ENCODE measurements at regions of chr3 and their contacts with region 1.

Region 1: GRCh38 chr3:134299185-134299887 is 48.7 kb upstream of the RYK start:
- DNase-seq: no peak
- ATAC-seq: peak; percentile 44 to 76 (median 70)
- H3K4me3 ChIP-seq: no peak overlapping the region
- H3K27ac ChIP-seq: no peak overlapping the region
- H3K4me1 ChIP-seq: peaks cover 0 to 5% (median 0%) of the 10 kb centered on the region in 12 donors
- H3K27me3 ChIP-seq: no peaks in the 10 kb centered on the region
- CTCF ChIP-seq: peak in 10 of 12 donors; percentile 14 to 56 (median 36)
- POLR2A ChIP-seq: no peak

Region 2: DNA sequence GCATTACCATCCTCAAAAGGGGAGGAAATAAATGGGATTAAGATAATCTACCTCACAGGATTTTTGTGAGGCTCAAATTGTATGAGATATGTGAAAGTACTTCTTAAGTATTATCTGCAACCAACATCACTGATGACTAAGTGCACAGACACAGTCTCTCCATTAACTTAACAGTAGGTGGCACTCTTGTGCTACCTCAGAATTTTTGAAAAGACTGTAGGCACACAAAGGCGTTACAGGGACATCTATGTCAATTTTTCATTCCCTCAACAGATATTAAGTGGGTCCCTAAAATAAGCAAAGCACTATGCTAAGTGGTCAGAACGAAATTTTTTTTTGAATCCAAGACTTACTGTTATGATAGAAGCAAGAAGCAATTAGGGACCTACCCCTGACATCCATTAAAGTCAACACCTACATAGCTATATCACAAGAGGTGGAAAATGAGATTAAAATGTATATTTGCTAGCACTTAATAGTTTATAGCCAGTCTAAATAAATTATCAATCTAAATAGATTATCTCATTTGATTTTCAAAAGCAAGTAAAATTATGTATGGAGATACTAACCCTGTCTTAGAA is 101.6 kb before region 1 on chr3:
- intact Hi-C with region 1: loop called in 1 of 10 experiments (anchors 5 kb)
- DNase-seq: no peak
- ATAC-seq: peak; percentile 52 to 82 (median 80)
- H3K4me3 ChIP-seq: no peak overlapping the region
- H3K27ac ChIP-seq: no peak overlapping the region
- H3K4me1 ChIP-seq: peaks cover 0 to 8% (median 0%) of the 10 kb centered on the region in 12 donors
- H3K27me3 ChIP-seq: no peaks in the 10 kb centered on the region
- CTCF ChIP-seq: peak; percentile 58 to 84 (median 71)
- POLR2A ChIP-seq: no peak

Region 3: DNA sequence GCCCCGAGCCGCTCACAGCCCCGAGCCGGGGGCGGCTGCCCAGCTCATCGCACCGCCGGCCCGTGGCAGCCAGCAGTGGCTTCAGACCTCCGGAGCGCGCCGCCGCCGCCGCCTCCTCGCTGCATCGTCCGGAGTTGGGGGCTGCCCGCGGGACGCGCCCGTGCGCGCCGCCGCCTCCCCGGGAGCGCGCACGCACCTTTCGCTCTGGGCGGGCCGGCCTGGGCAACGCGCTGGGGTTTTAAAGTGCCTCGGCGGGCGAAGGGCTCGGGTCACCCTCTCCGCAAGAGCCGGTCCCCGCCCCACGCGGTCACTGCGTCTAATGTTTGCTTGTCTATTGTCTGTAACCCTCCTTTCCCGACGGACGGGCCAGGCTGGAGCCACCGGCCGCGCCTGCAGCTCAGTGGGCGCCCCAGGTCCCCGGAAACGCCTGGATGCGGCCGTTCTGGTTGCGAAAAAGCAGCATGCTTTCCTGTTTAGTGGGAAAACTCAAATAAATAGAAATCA is 48.6 kb before region 1 on chr3 and contains the start of gene RYK:
- intact Hi-C with region 1: loop called in 1 of 10 experiments (anchors 5 kb)
- DNase-seq: peak; percentile 77 to 92 (median 88)
- ATAC-seq: peak; percentile 82 to 95 (median 95)
- H3K4me3 ChIP-seq: peak within 1 kb of the TSS; percentile 54 to 90 (median 77)
- H3K27ac ChIP-seq: peak within 1 kb of the TSS; percentile 79 to 98 (median 90)
- H3K4me1 ChIP-seq: peaks cover 0 to 52% (median 38%) of the 10 kb centered on the region in 12 donors
- H3K27me3 ChIP-seq: no peaks in the 10 kb centered on the region
- CTCF ChIP-seq: no peak
- POLR2A ChIP-seq: peak in 1 of 2 donors; percentile 76
- total RNA-seq, gene RYK: 32.9 to 43.7 (median 39.5) TPM